MCF 10A (cell line): ENCODE measurements at regions of chr6 and their contacts with region 1.

Region 1: DNA sequence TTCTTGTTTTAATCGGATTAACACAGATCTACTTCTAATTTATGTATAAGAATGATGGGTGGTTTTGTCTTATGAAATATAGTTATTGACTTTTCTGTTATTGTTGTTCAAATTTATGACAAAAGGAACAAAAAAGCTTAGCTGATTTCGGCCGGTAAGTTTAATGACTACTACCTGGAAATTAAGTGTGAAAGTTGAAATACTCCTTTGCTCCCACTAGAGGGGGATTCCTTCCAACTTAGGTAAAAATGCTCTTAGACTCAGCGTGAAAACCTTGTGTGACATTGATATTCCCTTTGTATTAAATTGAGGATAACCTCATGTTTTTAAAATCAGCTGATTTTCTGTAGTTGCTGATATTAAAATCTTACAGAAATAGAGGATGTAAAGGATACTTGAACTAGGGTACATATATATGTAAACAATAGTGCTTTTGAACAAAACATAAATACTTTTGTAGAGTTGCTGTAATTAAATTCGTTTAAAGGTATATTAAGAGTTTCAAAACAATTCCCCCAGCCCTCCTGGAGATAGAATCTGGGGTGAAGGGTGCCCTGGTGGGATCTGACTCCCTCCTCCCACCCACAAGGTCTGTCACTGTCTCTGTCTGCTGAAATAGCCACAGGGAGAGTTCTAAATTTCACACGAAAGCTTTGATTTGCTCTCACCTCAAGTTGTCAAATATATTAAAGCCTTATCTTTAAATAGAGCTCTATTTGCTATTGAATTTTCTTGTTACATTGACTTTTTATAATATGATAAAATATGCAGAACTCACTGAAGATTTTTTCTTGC is 257.5 kb downstream of the ARID1B start:
- DNase-seq: peak; percentile 69
- H3K4me3 Mint-ChIP-seq: peak overlapping the region; percentile 72
- H3K27ac Mint-ChIP-seq: no peak overlapping the region
- H3K4me1 Mint-ChIP-seq: peaks cover 23% of the 10 kb centered on the region
- H3K27me3 Mint-ChIP-seq: no peaks in the 10 kb centered on the region
- CTCF ChIP-seq: peak; percentile 42

Region 2: GRCh38 chr6:156564127-156564806 is 470.4 kb before region 1 on chr6:
- CTCF ChIA-PET with region 1: no interaction called
- POLR2A ChIA-PET with region 1: no interaction called
- intact Hi-C with region 1: loop called (anchors 5 kb)
- DNase-seq: peak; percentile 65
- H3K4me3 Mint-ChIP-seq: no peak overlapping the region
- H3K27ac Mint-ChIP-seq: no peak overlapping the region
- H3K4me1 Mint-ChIP-seq: no peaks in the 10 kb centered on the region
- H3K27me3 Mint-ChIP-seq: no peaks in the 10 kb centered on the region
- CTCF ChIP-seq: peak; percentile 90

Region 3: GRCh38 chr6:157021344-157021992 is 13.2 kb before region 1 on chr6:
- CTCF ChIA-PET with region 1: interaction called, 5 read pairs
- POLR2A ChIA-PET with region 1: interaction called, 122 read pairs
- intact Hi-C with region 1: no loop called
- DNase-seq: peak; percentile 88
- H3K4me3 Mint-ChIP-seq: peak overlapping the region; percentile 90
- H3K27ac Mint-ChIP-seq: peak overlapping the region; percentile 99
- H3K4me1 Mint-ChIP-seq: peaks cover 10% of the 10 kb centered on the region
- H3K27me3 Mint-ChIP-seq: no peaks in the 10 kb centered on the region
- CTCF ChIP-seq: peak; percentile 46

Region 4: GRCh38 chr6:157107915-157108651 is 73.5 kb after region 1 on chr6:
- CTCF ChIA-PET with region 1: interaction called, 4 read pairs
- POLR2A ChIA-PET with region 1: interaction called, 8 read pairs
- intact Hi-C with region 1: loop called (anchors 5 kb)
- DNase-seq: peak; percentile 62
- H3K4me3 Mint-ChIP-seq: no peak overlapping the region
- H3K27ac Mint-ChIP-seq: peak overlapping the region; percentile 79
- H3K4me1 Mint-ChIP-seq: peaks cover 26% of the 10 kb centered on the region
- H3K27me3 Mint-ChIP-seq: no peaks in the 10 kb centered on the region
- CTCF ChIP-seq: no peak

Region 5: DNA sequence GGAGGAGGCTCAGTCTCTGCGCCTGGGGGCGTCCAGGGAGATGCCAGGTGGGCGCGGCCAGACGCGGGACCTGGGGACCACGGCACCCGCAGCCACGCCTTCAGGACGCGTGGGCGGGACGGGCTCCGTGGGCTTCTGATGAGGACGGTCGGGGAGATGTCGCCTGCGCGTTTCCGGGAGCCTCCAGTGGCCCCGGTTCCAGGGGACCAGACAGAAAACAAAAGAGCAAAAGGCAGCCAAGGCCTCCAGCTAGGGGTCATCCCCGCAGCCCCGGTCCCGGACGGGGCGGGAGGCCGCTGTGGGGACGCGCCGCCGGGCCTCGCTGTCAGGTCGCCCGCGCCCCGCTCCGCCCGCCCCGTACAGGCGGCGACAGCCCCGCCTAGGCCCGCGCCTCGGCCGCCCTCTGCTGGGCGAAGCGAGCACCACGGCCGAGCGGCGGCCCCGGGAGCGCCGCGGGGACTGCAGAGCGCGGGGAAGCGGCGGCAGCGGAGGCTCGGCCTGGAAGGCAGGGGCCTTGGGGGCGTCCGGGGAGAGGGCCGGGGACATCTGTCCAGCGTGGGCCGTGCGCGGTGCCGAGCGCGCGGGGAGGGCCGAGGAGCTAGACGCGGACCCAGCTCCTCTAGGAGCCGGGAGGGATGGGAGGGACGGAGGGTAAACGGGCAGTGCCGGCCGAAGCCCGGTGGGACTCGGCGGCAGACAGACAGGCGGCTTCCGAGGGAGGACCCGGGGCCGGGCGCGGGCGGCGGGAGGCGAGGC is 240.0 kb after region 1 on chr6:
- CTCF ChIA-PET with region 1: interaction called, 3 read pairs
- POLR2A ChIA-PET with region 1: no interaction called
- intact Hi-C with region 1: loop called (anchors 2 kb)
- DNase-seq: peak; percentile 68
- H3K4me3 Mint-ChIP-seq: peak overlapping the region; percentile 73
- H3K27ac Mint-ChIP-seq: no peak overlapping the region
- H3K4me1 Mint-ChIP-seq: no peaks in the 10 kb centered on the region
- H3K27me3 Mint-ChIP-seq: no peaks in the 10 kb centered on the region
- CTCF ChIP-seq: peak; percentile 49

Region 6: GRCh38 chr6:157323255-157323965 is 288.8 kb after region 1 on chr6 and contains the start of gene TMEM242:
- CTCF ChIA-PET with region 1: no interaction called
- POLR2A ChIA-PET with region 1: no interaction called
- intact Hi-C with region 1: no loop called
- DNase-seq: peak; percentile 93
- H3K4me3 Mint-ChIP-seq: peak within 1 kb of the TSS; percentile 81
- H3K27ac Mint-ChIP-seq: peak within 1 kb of the TSS; percentile 87
- H3K4me1 Mint-ChIP-seq: no peaks in the 10 kb centered on the region
- H3K27me3 Mint-ChIP-seq: no peaks in the 10 kb centered on the region
- CTCF ChIP-seq: no peak
- total RNA-seq, gene TMEM242: 9.4 and 10.1 TPM in 2 replicates